H1 (cell line): ENCODE measurements at regions of chr4 and their contacts with region 1.

Region 1: DNA sequence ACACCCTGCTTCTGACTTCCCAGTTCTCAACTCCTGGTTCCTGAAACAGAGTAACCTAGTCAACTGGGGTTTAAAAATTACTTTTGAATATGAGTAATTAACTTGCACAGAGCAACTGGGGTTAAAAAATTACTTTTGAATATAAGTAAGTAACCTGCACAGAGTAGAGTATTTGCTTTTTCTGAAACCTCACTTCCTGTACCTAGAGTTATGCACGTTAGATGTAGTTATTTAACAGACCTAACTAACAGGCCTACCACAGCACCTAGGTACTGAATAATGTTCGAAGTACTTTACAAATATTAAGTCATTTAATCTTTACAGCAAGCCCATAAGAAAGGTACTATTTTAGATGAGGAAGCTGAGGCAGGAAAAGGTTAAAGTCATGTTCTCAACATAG is 32.8 kb downstream of the SLC39A8 start:
- DNase-seq: no peak
- H3K4me3 ChIP-seq: no peak overlapping the region
- H3K27ac ChIP-seq: no peak overlapping the region
- H3K4me1 ChIP-seq: no peaks in the 10 kb centered on the region
- H3K27me3 ChIP-seq: no peaks in the 10 kb centered on the region
- CTCF ChIP-seq: no peak
- EP300 ChIP-seq: no peak
- POLR2A ChIP-seq: no peak
- RAD21 ChIP-seq: no peak

Region 2: GRCh38 chr4:102268355-102268754 is 44.1 kb before region 1 on chr4:
- CTCF ChIA-PET with region 1: no interaction called
- POLR2A ChIA-PET with region 1: no interaction called
- DNase-seq: no peak
- H3K4me3 ChIP-seq: no peak overlapping the region
- H3K27ac ChIP-seq: no peak overlapping the region
- H3K4me1 ChIP-seq: no peaks in the 10 kb centered on the region
- H3K27me3 ChIP-seq: no peaks in the 10 kb centered on the region
- CTCF ChIP-seq: no peak
- EP300 ChIP-seq: no peak
- POLR2A ChIP-seq: no peak
- RAD21 ChIP-seq: no peak

Region 3: DNA sequence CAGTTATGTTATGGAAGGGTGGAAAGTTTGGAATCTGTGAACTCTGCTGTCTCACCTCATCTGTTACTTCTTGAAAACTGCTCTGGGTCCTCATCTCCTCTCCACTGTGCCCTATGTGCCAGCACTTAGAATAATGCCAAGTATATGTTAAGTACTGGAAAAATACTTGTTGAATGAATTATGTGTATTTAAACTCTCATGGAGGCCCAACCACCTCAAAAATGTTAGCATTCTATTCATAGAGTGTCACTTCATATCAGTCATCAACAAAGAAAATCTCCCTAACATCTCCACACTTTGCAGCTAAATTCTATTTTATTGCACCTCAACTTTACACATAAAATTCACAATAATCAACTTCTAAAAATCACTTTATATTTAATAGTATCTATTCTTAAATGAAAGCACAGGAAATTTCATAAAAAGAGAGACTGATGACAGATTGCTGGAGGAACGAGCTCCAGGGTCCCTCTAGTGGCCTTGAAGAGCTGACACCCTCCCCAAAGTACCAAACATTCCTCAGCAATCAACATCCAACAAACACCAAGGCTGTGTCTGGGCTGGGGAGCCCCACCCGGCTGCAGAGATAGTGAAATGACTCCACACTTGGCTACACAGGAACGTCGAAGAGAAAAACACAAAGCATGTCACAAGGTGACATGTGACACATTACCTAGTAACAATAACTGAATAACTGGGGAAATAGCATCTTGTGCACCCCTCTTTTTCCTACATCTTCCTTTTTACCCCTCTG is 12.9 kb before region 1 on chr4:
- CTCF ChIA-PET with region 1: interaction called, 19 read pairs
- POLR2A ChIA-PET with region 1: interaction called, 3 read pairs
- DNase-seq: peak in 1 of 2 experiments; percentile 53
- H3K4me3 ChIP-seq: no peak overlapping the region
- H3K27ac ChIP-seq: no peak overlapping the region
- H3K4me1 ChIP-seq: peaks cover 0 to 3% (median 2%) of the 10 kb centered on the region in 4 experiments; a peak in 4 of 7 replicates
- H3K27me3 ChIP-seq: no peaks in the 10 kb centered on the region
- CTCF ChIP-seq: peak; percentile 61 to 74 (median 68)
- EP300 ChIP-seq: no peak
- POLR2A ChIP-seq: no peak
- RAD21 ChIP-seq: peak; percentile 69 to 71

Region 4: GRCh38 chr4:102493794-102494193 is 181.3 kb after region 1 on chr4:
- CTCF ChIA-PET with region 1: no interaction called
- POLR2A ChIA-PET with region 1: no interaction called
- DNase-seq: no peak
- H3K4me3 ChIP-seq: no peak overlapping the region
- H3K27ac ChIP-seq: no peak overlapping the region
- H3K4me1 ChIP-seq: no peaks in the 10 kb centered on the region
- H3K27me3 ChIP-seq: no peaks in the 10 kb centered on the region
- CTCF ChIP-seq: no peak
- EP300 ChIP-seq: no peak
- POLR2A ChIP-seq: no peak
- RAD21 ChIP-seq: no peak